ENCODE measurements at regions of chr16 and their contacts with region 1.

Region 1: DNA sequence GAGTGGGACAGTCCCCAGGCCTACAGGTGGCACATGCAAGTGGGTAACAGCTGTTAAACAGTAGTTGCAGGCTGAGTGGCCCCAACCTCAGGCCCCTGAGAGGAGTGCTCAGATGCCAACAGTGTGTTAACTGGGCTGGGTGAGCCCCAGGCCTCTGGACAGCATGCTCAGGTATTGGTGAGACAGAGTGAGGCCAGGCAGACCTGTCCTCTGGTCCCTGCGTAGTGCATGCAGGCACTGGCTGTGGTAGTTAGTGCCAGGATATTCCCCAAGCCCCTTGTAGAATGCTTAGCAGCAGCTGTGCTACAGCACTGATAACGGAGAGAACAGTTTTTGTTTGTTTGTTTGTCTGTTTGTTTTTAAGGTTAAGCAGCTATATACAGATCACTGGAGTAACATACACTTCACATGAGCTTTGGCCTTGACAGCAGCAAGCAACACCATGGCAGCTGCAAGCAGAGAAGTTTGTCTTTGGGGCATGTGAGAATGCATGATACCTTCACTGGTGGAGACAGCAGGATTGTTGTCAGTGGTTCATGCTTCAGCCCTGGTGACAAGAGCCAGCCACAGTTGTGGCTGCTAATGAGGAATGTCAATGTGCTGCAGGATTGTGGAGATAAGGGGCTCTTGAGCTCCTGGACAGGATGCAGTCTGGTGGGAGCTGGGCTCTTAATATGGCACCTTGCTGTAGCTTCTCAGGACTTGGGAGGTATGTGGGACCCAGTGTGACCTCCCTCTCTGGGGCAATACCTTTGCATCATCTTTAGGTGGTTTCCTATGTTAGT is 614.4 kb downstream of the CDH11 start:
- DNase-seq: no peak
- ATAC-seq: peak in 6 of 8 donors; percentile 23 to 74 (median 68)
- H3K4me3 ChIP-seq: no peak overlapping the region
- H3K27ac ChIP-seq: no peak overlapping the region
- H3K4me1 ChIP-seq: no peaks in the 10 kb centered on the region
- H3K27me3 ChIP-seq: no peaks in the 10 kb centered on the region
- CTCF ChIP-seq: no peak

Region 2: GRCh38 chr16:64489451-64489850 is 18.0 kb before region 1 on chr16:
- intact Hi-C with region 1: loop called in 1 of 10 experiments (anchors 1 kb)
- DNase-seq: no peak
- ATAC-seq: no peak
- H3K4me3 ChIP-seq: no peak overlapping the region
- H3K27ac ChIP-seq: no peak overlapping the region
- H3K4me1 ChIP-seq: no peaks in the 10 kb centered on the region
- H3K27me3 ChIP-seq: no peaks in the 10 kb centered on the region
- CTCF ChIP-seq: no peak